Left lung (tissue), 14 donors: ENCODE measurements at regions of chr1 and their contacts with region 1.

Region 1: GRCh38 chr1:17826165-17826488 is 71.0 kb downstream of the ACTL8 start:
- DNase-seq: peak in 2 of 4 donors; percentile 4 to 21
- ATAC-seq: peak; percentile 62
- H3K4me3 ChIP-seq: no peak overlapping the region
- H3K27ac ChIP-seq: no peak overlapping the region
- H3K4me1 ChIP-seq: no peaks in the 10 kb centered on the region
- H3K27me3 ChIP-seq: peaks cover 0 to 68% of the 10 kb centered on the region in 2 donors
- CTCF ChIP-seq: peak; percentile 48 to 50

Region 2: GRCh38 chr1:17661546-17662157 is 164.5 kb before region 1 on chr1:
- intact Hi-C with region 1: loop called in 1 of 2 experiments (anchors 10 kb)
- DNase-seq: peak in 3 of 4 donors; percentile 25 to 51 (median 46)
- ATAC-seq: peak; percentile 74
- H3K4me3 ChIP-seq: no peak overlapping the region
- H3K27ac ChIP-seq: no peak overlapping the region
- H3K4me1 ChIP-seq: no peaks in the 10 kb centered on the region
- H3K27me3 ChIP-seq: no peaks in the 10 kb centered on the region
- CTCF ChIP-seq: peak; percentile 70 to 76